ENCODE measurements at regions of chr1 and their contacts with region 1.

Region 1: DNA sequence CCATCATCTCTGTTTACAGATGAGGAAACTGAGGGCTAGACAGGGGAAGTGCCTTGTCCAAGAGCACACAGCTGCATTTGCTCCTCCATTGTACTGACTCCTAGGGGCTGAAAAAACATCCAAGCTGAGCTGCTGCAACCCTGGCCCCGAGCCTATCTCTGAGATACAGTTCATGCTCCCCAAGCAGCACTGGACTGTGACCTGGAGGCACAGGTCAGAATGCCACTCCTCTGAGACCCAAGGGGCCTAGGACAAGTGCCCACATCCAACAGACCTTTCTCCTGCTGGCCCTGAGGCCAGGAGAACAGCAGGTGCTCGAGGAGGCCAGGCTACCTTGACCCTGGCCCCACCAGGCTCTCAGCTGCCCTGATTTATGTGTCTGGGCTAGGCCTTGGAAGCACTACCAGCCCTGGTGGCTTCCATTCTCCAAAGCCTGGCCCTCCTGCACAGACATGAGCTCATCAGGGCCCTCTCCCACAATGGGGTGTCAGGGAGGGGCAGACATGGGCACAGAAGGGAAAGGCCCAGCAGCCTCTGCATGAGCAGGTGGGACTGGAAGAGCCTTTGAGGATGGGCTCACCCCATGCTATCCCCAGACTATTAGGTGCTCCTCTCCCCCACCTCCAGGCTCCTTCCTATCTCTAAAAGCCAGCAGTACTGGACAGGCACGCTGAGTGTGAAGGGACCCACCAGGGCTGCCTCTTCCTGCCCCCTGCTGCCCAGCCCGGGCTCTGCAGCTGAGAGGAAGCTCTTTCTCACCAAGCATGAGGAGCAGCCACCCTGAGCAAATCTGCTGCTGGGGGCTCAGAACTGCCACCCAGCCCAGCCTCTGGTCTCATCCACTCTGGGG is 18.8 kb downstream of the ADGRB2 start:
- DNase-seq: peak; percentile 82
- H3K4me3 ChIP-seq: peak overlapping the region; percentile 51
- H3K27ac ChIP-seq: peak overlapping the region; percentile 80
- H3K4me1 ChIP-seq: peaks cover 40% of the 10 kb centered on the region
- CTCF ChIP-seq: peak; percentile 83

Region 2: GRCh38 chr1:31663622-31664452 is 81.5 kb before region 1 on chr1:
- CTCF ChIA-PET with region 1: interaction called, 5 read pairs
- POLR2A ChIA-PET with region 1: no interaction called
- intact Hi-C with region 1: loop called (anchors 1 kb)
- DNase-seq: peak; percentile 60
- H3K4me3 ChIP-seq: no peak overlapping the region
- H3K27ac ChIP-seq: no peak overlapping the region
- H3K4me1 ChIP-seq: no peaks in the 10 kb centered on the region
- CTCF ChIP-seq: peak; percentile 91

Region 3: DNA sequence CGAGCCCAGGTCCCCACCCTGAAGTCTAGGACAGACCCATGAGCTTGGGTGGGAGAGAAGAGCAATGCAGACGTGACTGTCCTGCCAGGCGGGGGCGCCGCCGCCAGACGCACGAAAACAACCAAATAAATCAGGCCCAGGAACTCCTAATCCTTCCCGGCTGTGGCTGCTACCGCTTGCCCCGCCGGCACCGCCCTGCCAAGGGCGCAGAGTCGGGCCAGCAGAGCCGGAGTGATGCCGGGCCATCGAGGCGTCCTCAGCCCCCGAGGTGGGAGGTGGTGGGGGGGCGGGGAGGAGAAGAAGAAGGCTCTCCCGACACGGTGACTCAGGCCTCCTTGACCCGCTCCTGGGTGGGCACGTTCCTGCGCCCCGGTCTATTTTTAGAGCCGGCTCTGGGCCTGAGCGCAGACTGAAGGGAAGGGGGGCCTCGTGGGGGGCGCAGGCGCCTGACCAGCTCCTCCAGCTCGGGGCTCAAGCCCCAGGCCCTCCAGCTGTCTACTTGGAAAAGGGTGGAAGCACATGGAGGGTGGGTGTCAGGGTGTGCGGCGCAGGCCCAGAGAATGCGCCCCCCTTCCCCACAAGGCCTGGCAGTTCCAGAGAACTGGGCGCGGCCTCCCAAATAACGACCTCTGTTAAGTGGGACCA is 30.8 kb before region 1 on chr1:
- CTCF ChIA-PET with region 1: interaction called, 9 read pairs
- POLR2A ChIA-PET with region 1: interaction called, 5 read pairs
- intact Hi-C with region 1: loop called (anchors 1 kb)
- DNase-seq: peak; percentile 63
- H3K4me3 ChIP-seq: no peak overlapping the region
- H3K27ac ChIP-seq: no peak overlapping the region
- H3K4me1 ChIP-seq: no peaks in the 10 kb centered on the region
- CTCF ChIP-seq: peak; percentile 82

Measured in OCI-LY7 (cell line).